Activated naive CD4-positive, alpha-beta T cell treated with anti-CD3 and anti-CD28 coated beads for 36 hours (primary cell): ENCODE measurements at regions of chr1 and their contacts with region 1.

Region 1: DNA sequence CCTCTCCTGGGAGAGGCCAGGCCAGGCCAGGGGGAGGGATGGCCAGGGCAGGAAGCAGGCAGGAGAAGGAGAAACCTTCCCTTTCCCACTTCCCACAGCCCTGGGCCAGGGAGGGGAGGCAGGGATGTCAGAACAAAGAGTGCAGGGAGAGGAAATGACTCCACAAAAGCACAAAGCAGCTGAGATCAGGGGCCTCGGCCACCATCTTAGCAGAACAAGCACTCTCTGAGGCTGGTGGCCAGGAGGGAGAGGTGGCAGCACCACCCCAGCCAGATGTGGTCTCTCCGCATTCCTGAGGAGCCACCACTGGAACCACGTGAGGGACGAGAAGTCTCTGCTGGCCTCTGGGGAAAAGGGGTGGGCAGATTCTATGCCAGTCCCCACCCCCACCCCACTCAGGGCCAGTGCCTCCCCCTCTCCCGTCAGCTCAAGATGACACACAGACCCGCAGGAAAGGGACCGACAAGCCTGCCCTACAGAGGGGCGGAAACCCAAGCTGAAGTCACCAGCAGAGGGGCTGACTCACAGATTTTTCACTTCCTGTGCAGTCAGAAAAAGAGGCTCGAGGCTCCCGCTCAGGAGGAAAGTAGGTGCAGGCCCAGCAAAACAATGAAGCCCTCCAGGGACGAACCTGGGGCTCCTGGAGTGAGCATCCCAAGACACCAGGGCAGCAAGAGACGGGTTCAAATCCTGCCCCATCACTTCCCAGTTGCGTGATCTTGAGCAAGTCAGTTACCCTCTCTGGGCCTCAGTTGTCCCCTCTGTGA is 24.1 kb upstream of the ALDH4A1 start:
- DNase-seq: peak; percentile 95
- H3K4me3 Mint-ChIP-seq: peak overlapping the region; percentile 80
- H3K27ac Mint-ChIP-seq: peak overlapping the region; percentile 99
- H3K4me1 Mint-ChIP-seq: peaks cover 74% of the 10 kb centered on the region
- H3K27me3 Mint-ChIP-seq: no peaks in the 10 kb centered on the region

Region 2: GRCh38 chr1:18949686-18950400 is 23.3 kb after region 1 on chr1:
- CTCF ChIA-PET with region 1: interaction called, 28 read pairs
- intact Hi-C with region 1: loop called (anchors 1 kb)
- DNase-seq: peak; percentile 45
- H3K4me3 Mint-ChIP-seq: peak overlapping the region; percentile 75
- H3K27ac Mint-ChIP-seq: peak overlapping the region; percentile 93
- H3K4me1 Mint-ChIP-seq: peaks cover 95% of the 10 kb centered on the region
- H3K27me3 Mint-ChIP-seq: no peaks in the 10 kb centered on the region

Region 3: DNA sequence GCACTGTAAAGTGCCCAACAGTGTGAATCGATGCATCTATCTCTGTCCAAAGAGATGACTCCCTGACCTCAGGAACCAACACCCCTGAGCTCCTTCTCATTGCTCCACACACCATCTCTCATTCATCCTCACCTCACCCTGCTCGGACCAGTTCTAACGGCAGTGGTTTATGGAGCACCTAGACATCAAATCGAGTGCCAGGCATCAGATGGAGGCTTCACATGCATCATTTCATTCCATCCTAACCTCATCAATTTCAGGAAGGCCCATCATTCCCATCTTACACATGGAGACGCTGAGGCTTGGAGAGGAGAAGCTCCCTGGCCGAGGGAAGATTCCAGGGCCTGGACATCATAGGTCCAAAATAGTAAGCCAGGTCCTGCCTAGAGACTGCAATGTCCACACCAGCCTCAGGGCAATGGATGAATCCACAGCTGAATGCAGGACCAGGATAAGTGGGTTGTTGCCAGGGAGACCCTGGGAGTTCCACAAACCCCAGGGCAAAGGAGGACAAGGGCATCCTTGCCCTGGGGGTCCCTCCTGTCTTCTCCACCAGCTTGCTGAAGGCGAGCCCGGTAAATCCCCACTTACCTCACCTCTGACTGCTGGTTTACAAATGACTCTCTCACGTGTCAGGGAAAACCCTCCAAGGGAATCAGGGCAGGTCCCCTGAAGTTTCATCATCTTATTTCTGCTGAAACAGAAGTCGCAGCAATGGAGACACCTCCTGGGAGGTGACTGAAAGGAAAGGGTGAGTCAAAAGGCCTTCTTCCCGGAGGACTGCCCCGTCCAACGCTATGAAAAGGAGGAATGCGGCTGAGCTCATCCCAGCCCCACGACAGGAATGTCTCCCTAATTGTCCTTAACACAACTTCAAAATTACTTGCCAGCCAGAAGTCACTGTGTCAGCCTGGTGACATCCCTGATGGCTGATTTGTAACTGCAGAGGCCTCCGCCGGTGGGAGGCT is 39.0 kb after region 1 on chr1:
- CTCF ChIA-PET with region 1: interaction called, 5 read pairs
- intact Hi-C with region 1: loop called (anchors 1 kb)
- DNase-seq: peak; percentile 86
- H3K4me3 Mint-ChIP-seq: no peak overlapping the region
- H3K27ac Mint-ChIP-seq: peak overlapping the region; percentile 77
- H3K4me1 Mint-ChIP-seq: peaks cover 12% of the 10 kb centered on the region
- H3K27me3 Mint-ChIP-seq: no peaks in the 10 kb centered on the region

Region 4: GRCh38 chr1:19010995-19011844 is 84.7 kb after region 1 on chr1:
- CTCF ChIA-PET with region 1: no interaction called
- intact Hi-C with region 1: loop called (anchors 1 kb)
- DNase-seq: peak; percentile 95
- H3K4me3 Mint-ChIP-seq: no peak overlapping the region
- H3K27ac Mint-ChIP-seq: peak overlapping the region; percentile 83
- H3K4me1 Mint-ChIP-seq: peaks cover 35% of the 10 kb centered on the region
- H3K27me3 Mint-ChIP-seq: no peaks in the 10 kb centered on the region

Region 5: DNA sequence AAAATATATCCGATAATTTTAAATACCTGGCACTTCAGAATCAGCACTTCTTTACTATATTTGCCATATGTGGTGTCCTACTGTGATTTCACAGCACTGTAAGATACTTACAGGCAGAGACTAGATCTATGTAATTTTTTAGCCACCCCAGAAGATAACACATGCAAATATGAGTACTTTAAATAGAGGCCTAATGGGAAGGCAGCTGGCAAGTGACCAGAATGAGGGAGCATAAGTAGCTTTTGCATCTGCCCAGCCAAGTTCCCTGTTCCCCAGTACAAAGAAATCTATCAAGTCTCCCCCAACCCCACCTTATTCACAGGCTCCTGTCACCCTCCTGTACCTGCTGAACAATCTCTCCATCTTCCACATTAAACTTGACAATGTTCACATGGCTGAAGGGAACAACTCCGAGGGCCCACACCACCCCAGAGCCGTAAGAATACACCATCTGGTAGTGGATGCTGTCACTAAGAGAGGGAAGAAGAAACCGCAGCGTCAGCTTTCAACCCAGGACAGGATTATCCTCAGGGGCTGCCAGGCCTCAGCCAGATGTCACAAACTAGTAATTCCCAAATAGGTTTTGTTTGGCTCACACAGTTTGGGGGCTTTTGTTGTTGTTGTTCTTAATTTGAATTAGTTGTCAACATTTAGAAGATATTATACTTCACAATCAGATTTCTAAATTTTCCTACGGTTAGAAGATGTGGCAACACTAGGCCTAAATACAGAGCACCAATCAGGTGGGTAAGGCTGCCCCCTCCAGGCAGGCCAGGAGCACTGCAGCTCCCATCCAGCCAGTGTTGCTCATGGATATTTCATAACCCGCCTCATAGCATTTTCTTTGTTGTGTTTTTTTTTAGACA is 314.4 kb after region 1 on chr1:
- CTCF ChIA-PET with region 1: interaction called, 3 read pairs
- intact Hi-C with region 1: loop called (anchors 5 kb)
- DNase-seq: peak; percentile 85
- H3K4me3 Mint-ChIP-seq: no peak overlapping the region
- H3K27ac Mint-ChIP-seq: peak overlapping the region; percentile 61
- H3K4me1 Mint-ChIP-seq: no peaks in the 10 kb centered on the region
- H3K27me3 Mint-ChIP-seq: no peaks in the 10 kb centered on the region